Lower lobe of right lung (tissue), 2 donors: ENCODE measurements at regions of chr15 and their contacts with region 1.

Region 1: DNA sequence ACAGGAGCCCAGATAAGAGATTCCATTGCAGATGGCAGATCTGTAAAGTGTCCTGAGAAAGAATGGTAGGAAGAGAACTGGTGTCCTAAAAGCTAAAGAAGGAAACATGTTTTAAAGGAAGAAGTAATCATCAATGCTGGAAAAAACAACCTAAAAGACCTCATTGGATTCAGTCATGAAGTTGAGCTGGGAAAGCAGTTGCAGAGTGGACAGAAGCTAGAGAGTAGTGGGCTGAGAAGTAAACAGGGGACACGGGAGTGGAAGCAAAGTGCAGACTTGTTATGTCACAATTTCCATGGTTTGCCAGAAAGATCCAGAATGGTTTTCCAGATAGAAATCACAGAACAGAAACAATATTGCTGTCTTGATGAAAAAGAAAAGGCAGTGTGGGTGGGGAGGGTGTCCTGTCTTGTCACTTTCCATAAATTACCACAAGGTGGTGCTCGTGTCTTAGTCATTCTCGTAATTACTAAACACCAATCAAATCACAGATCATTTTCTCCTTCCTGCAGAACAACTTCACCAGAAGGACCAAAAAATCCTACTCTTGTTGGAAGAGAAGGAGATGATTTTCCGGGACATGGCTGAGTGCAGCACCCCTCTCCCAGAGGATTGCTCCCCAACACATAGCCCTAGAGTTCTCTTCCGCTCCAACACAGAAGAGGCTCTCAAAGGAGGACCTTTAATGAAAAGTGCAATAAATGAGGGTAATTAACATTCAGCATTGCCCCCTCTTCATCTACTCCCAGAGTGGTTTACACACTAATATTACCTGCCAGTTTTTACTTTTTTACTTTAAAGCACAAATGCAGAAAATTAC is 64.5 kb downstream of the KLHL25 start:
- DNase-seq: no peak
- ATAC-seq: peak; percentile 75 to 78
- H3K4me3 ChIP-seq: no peak overlapping the region
- H3K27ac ChIP-seq: no peak overlapping the region
- H3K4me1 ChIP-seq: peaks cover 20% of the 10 kb centered on the region
- H3K27me3 ChIP-seq: no peaks in the 10 kb centered on the region
- CTCF ChIP-seq: peak; percentile 77

Region 2: GRCh38 chr15:85354461-85354860 is 375.8 kb before region 1 on chr15:
- intact Hi-C with region 1: no loop called
- DNase-seq: no peak
- ATAC-seq: no peak
- H3K4me3 ChIP-seq: no peak overlapping the region
- H3K27ac ChIP-seq: no peak overlapping the region
- H3K4me1 ChIP-seq: peaks cover 13% of the 10 kb centered on the region
- H3K27me3 ChIP-seq: no peaks in the 10 kb centered on the region
- CTCF ChIP-seq: no peak

Region 3: GRCh38 chr15:85689729-85690128 is 40.5 kb before region 1 on chr15:
- intact Hi-C with region 1: no loop called
- DNase-seq: peak; percentile 60
- ATAC-seq: peak; percentile 73 to 74
- H3K4me3 ChIP-seq: peak overlapping the region; percentile 44
- H3K27ac ChIP-seq: peak overlapping the region; percentile 75
- H3K4me1 ChIP-seq: peaks cover 64% of the 10 kb centered on the region
- H3K27me3 ChIP-seq: no peaks in the 10 kb centered on the region
- CTCF ChIP-seq: no peak

Region 4: DNA sequence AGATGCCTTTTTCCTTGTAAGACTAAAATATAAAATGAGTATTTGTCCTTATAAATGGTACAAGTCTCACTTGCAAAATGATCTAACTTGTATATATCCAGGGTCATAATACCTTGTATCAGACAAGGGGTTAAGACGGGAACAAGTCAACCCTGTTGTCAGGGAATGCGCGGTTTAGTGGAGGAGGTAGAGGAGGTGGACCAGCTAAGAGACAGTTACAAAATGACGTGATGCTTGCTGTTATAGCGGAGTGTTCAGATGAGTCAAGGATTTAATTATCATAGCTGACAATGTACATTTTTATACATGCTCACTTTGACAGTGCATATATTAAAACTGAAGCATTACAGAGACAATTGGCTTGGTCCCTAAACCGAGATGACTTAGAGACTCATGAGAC is 91.3 kb after region 1 on chr15:
- intact Hi-C with region 1: no loop called
- DNase-seq: no peak
- ATAC-seq: no peak
- H3K4me3 ChIP-seq: no peak overlapping the region
- H3K27ac ChIP-seq: no peak overlapping the region
- H3K4me1 ChIP-seq: no peaks in the 10 kb centered on the region
- H3K27me3 ChIP-seq: no peaks in the 10 kb centered on the region
- CTCF ChIP-seq: no peak

Region 5: DNA sequence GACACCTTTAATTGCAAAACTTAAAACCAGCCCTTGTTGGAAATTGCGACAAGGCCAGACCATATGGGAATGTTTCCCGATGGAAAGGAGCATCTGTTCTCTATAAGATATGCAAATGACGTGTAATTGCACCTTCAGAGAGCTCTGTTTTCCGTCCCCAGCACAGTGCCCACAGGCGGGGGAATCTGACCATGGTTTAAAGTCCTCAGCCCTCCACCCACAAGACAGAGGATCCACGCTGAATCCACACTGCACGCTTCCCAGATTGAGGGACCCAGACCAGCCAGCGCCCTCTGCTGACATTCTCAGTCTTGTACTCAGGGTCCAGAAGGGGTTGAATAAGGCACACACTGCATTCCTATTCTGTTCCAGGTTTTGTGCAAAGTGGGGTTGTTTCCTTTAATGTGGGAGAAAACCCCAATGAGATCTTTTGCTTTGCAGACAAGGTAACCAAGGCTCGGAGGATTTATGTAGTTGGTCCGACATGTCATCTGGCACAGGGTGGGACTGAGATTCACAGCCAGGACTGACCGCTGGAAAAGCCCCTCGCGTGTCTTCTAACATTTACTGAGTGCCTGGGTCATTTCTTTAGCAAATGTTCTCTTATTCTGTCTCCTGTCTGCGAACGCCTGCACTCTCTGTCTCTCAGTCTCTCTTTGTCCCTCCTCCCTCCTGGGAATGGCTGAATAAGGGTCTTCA is 101.4 kb after region 1 on chr15:
- intact Hi-C with region 1: loop called (anchors 10 kb)
- DNase-seq: no peak
- ATAC-seq: peak; percentile 77 to 85
- H3K4me3 ChIP-seq: no peak overlapping the region
- H3K27ac ChIP-seq: no peak overlapping the region
- H3K4me1 ChIP-seq: no peaks in the 10 kb centered on the region
- H3K27me3 ChIP-seq: no peaks in the 10 kb centered on the region
- CTCF ChIP-seq: peak; percentile 57